Prostate gland (tissue), 2 donors: ENCODE measurements at regions of chrX and their contacts with region 1.

Region 1: GRCh38 chrX:11100281-11101035 is 10.7 kb upstream of the HCCS start:
- DNase-seq: peak; percentile 36
- H3K4me3 ChIP-seq: no peak overlapping the region
- H3K27ac ChIP-seq: peak overlapping the region in 1 of 2 donors; percentile 27
- H3K4me1 ChIP-seq: no peaks in the 10 kb centered on the region
- H3K27me3 ChIP-seq: no peaks in the 10 kb centered on the region
- CTCF ChIP-seq: peak; percentile 25 to 57 (median 42)
- POLR2A ChIP-seq: no peak

Region 2: DNA sequence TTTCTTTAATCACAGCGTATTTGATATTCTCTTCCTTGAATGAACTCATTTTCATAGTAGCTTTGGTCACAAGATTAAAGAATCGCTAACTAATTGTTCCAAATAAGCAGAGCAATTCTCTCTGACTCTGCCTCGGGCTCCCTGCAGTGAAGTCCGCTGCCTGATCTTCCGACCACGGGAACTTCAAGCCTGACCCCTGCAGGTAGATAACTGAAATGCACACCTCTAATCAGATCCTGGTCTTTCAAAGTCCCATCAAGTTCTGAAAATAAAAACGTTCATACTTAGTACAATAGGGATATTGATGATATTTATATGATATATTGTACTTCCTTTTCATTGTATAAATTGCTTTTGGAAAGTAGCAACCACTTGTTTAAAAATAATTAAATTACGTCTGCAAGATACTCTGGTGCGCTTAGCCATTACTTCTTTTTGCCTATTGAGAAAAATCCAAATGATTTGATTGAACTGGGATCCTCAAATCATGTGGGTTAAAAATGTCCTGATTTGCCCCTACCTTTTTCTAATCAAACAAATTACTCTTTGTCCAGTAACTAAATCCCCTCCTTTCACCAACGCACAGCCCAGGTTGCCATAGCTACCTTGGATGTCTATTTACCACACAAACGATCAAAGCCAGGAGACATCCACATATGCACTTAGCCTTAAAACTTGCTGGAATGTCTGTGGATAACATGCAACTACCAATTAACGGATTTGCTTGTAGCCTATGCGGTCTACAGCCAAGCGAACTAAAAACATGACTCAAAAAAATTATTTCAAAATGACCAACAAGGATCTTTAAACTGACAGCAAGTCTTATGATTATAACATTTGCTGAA is 484.3 kb before region 1 on chrX:
- intact Hi-C with region 1: loop called (anchors 10 kb)
- DNase-seq: peak; percentile 34
- H3K4me3 ChIP-seq: no peak overlapping the region
- H3K27ac ChIP-seq: no peak overlapping the region
- H3K4me1 ChIP-seq: no peaks in the 10 kb centered on the region
- H3K27me3 ChIP-seq: no peaks in the 10 kb centered on the region
- CTCF ChIP-seq: peak; percentile 24 to 57 (median 44)
- POLR2A ChIP-seq: no peak

Region 3: DNA sequence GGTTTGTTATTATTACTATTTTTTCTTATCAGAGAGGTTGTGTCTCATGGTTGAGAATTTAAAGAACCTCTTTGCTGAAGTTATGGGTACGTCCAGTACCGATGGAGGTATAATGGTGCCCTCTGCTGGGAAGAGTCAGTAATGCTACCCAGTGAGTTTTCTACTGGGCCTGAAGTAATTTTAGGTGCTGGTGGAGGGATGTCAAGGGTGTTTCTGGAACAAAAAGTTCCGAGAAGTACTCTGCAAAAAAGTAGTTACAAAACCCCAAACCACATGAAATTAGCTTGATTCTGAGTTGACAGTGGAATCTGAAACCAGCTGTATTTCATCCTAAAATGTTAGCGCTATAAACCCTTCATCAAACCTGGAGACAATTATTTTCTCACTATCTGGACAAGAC is 377.6 kb before region 1 on chrX:
- intact Hi-C with region 1: loop called (anchors 10 kb)
- DNase-seq: peak; percentile 38
- H3K4me3 ChIP-seq: no peak overlapping the region
- H3K27ac ChIP-seq: no peak overlapping the region
- H3K4me1 ChIP-seq: no peaks in the 10 kb centered on the region
- H3K27me3 ChIP-seq: no peaks in the 10 kb centered on the region
- CTCF ChIP-seq: peak; percentile 23 to 61 (median 52)
- POLR2A ChIP-seq: no peak

Region 4: GRCh38 chrX:10939384-10939897 is 161.0 kb before region 1 on chrX:
- intact Hi-C with region 1: no loop called
- DNase-seq: peak; percentile 26
- H3K4me3 ChIP-seq: no peak overlapping the region
- H3K27ac ChIP-seq: no peak overlapping the region
- H3K4me1 ChIP-seq: no peaks in the 10 kb centered on the region
- H3K27me3 ChIP-seq: no peaks in the 10 kb centered on the region
- CTCF ChIP-seq: no peak
- POLR2A ChIP-seq: no peak

Region 5: GRCh38 chrX:11244636-11245035 is 144.2 kb after region 1 on chrX:
- intact Hi-C with region 1: no loop called
- DNase-seq: peak; percentile 55
- H3K4me3 ChIP-seq: no peak overlapping the region
- H3K27ac ChIP-seq: peak overlapping the region; percentile 28 to 51
- H3K4me1 ChIP-seq: no peaks in the 10 kb centered on the region
- H3K27me3 ChIP-seq: no peaks in the 10 kb centered on the region
- CTCF ChIP-seq: no peak
- POLR2A ChIP-seq: no peak